IMR-90 (cell line): ENCODE measurements at regions of chr4 and their contacts with region 1.

Region 1: GRCh38 chr4:165493359-165493758 is 114.6 kb downstream of the CPE start:
- DNase-seq: peak; percentile 38
- ATAC-seq: peak; percentile 99
- H3K4me3 ChIP-seq: no peak overlapping the region
- H3K27ac ChIP-seq: no peak overlapping the region
- H3K4me1 ChIP-seq: no peaks in the 10 kb centered on the region
- H3K27me3 ChIP-seq: no peaks in the 10 kb centered on the region
- CTCF ChIP-seq: peak; percentile 68
- POLR2A ChIP-seq: no peak
- RAD21 ChIP-seq: peak; percentile 78

Region 2: GRCh38 chr4:164512124-164512523 is 981.2 kb before region 1 on chr4:
- CTCF ChIA-PET with region 1: no interaction called
- POLR2A ChIA-PET with region 1: no interaction called
- dilution Hi-C with region 1: no loop called
- in situ Hi-C with region 1: no loop called
- intact Hi-C with region 1: no loop called
- DNase-seq: no peak
- ATAC-seq: no peak
- H3K4me3 ChIP-seq: no peak overlapping the region
- H3K27ac ChIP-seq: no peak overlapping the region
- H3K4me1 ChIP-seq: no peaks in the 10 kb centered on the region
- H3K27me3 ChIP-seq: no peaks in the 10 kb centered on the region
- CTCF ChIP-seq: no peak
- POLR2A ChIP-seq: no peak
- RAD21 ChIP-seq: no peak

Region 3: DNA sequence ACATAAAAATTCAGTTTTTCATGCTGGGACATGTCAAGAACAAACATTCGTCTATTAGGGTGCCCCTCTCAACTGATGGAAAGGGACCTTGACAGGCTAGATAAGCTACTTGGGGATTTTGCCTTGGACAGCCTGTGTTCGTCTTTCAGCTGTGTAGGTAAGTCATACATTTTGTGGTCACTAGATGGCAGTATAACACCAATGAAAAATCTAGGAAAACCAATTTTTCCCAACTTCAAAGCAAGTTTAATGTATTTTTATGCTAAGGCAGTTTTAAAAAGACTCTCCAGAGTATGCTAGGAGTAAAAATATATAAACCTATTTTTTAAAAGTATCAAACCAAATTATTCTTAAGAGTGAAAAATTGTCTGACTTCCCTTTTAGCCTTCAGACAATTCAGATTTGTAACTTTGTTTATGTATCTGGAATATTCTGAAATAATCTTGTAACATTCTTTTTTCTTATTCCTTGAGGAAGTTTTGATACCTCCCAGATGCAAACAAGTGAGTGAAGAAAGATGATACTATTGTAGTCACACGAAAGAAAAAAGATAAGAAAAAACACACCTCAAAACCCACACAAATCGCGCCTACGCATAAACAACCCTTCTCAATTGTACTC is 43.8 kb after region 1 on chr4:
- CTCF ChIA-PET with region 1: interaction called, 7 read pairs
- POLR2A ChIA-PET with region 1: no interaction called
- dilution Hi-C with region 1: no loop called
- in situ Hi-C with region 1: no loop called
- intact Hi-C with region 1: loop called (anchors 1 kb)
- DNase-seq: peak; percentile 39
- ATAC-seq: peak; percentile 59
- H3K4me3 ChIP-seq: no peak overlapping the region
- H3K27ac ChIP-seq: no peak overlapping the region
- H3K4me1 ChIP-seq: no peaks in the 10 kb centered on the region
- H3K27me3 ChIP-seq: no peaks in the 10 kb centered on the region
- CTCF ChIP-seq: peak; percentile 66
- POLR2A ChIP-seq: no peak
- RAD21 ChIP-seq: peak; percentile 55

Region 4: DNA sequence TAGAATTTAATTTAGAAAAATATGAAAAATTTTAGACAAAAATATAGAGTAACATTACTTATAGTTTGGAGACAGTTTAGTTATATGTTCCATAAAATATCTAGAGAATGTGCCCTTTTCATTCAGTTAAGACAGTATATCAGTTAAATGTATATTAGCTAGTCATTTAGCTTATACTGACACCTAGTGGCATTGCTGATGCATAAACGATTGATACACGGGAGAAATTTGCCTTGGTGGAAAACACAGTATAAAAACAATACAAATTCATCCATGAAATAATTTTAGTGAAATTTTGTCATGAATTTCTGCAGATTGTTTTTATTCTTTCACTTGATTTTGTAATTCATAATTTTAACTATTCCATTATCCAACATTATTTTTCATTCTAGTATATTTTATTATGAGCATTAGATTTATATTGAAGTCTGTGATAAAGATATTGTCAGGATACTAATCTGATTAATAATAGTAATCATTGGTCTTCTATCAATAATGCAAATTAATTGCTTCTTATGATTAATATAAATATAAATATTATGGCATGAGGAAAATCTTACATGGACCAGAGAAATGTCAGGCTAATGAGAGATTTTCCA is 598.7 kb after region 1 on chr4:
- CTCF ChIA-PET with region 1: interaction called, 18 read pairs
- POLR2A ChIA-PET with region 1: no interaction called
- dilution Hi-C with region 1: no loop called
- in situ Hi-C with region 1: loop called (anchors 10 kb)
- intact Hi-C with region 1: loop called (anchors 1 kb)
- DNase-seq: peak; percentile 29
- ATAC-seq: peak; percentile 54
- H3K4me3 ChIP-seq: no peak overlapping the region
- H3K27ac ChIP-seq: no peak overlapping the region
- H3K4me1 ChIP-seq: no peaks in the 10 kb centered on the region
- H3K27me3 ChIP-seq: no peaks in the 10 kb centered on the region
- CTCF ChIP-seq: peak; percentile 66
- POLR2A ChIP-seq: no peak
- RAD21 ChIP-seq: peak; percentile 63

Region 5: DNA sequence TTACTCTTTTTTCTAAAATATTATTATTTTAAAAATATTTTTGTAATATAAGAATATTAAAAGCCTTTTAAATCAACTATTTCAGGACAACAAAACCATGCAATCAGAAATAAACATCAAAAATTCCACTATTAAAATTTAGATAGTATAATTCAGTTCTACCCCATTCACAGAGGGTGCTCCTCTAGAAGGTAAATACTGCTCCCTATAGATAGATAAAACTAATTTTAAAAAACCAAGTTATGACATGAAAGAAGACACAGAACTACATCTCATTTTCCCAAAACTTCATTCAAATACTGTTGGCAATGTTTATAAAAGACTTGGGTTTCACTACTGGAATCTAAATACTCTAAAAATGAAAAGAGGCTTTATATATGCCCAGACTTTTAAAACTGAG is 1521.6 kb after region 1 on chr4:
- CTCF ChIA-PET with region 1: no interaction called
- POLR2A ChIA-PET with region 1: no interaction called
- dilution Hi-C with region 1: no loop called
- in situ Hi-C with region 1: no loop called
- intact Hi-C with region 1: loop called (anchors 10 kb)
- DNase-seq: no peak
- ATAC-seq: no peak
- H3K4me3 ChIP-seq: no peak overlapping the region
- H3K27ac ChIP-seq: no peak overlapping the region
- H3K4me1 ChIP-seq: no peaks in the 10 kb centered on the region
- H3K27me3 ChIP-seq: no peaks in the 10 kb centered on the region
- CTCF ChIP-seq: no peak
- POLR2A ChIP-seq: no peak
- RAD21 ChIP-seq: no peak